Activated CD4-positive, alpha-beta T cell treated with anti-CD3 and anti-CD28 coated beads, Interleukin-2, amount 10 ng/mL, durations not matched to agents 24 days and 14 days (primary cell): ENCODE measurements at regions of chr11 and their contacts with region 1.

Region 1: DNA sequence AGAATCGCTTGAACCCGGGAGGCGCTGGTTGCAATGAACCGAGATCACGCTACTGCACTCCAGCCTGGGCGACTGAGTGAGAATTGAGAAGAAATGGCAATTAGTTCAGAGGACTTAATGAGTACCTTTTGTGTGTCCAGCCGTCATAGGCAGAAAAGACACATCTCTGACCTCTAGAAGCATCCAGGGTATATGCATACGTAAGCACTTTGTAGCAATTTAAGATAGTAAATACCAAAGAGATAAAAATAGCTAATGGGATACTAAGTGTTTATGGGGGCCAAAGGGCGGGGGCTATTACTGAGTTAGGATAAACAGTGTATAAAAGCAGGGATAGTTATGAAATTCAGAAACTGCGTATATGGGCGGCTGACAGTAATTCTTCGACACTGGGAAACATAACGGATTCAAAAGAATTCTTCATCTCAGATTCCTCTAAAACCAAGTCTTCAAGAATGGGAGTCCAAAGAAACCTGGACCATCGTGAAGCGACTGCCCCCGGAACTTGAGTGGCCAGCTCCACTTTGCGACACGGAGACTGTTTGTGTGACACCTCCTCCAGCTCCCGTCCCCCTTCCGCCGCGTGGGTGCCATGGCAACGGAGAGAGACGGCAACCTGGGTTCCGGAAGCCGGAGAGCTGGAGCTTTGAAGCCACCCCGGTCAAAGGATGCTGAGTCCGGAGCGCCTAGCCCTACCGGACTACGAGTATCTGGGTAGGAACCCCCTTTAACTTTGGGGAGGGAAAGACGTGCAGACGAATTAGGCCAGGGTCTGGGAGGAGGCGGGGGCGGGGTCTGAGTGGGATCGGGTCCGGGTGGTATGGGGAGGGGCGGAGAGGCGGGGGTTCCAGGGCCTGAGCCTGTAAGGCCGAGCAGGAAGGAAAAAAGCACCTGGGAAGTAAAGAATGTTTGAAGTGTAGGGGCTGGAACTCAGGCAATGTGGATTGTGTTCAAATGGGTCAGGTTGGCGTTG is at the start of gene CSTPP1:
- DNase-seq: peak; percentile 98
- H3K4me3 Mint-ChIP-seq: peak within 1 kb of the TSS; percentile 89
- H3K27ac Mint-ChIP-seq: peak within 1 kb of the TSS; percentile 94
- H3K4me1 Mint-ChIP-seq: peaks cover 14% of the 10 kb centered on the region
- H3K27me3 Mint-ChIP-seq: peaks cover 7% of the 10 kb centered on the region
- total RNA-seq, gene CSTPP1: 16.9 and 18.0 TPM in 2 replicates

Region 2: GRCh38 chr11:46700241-46701077 is 236.0 kb before region 1 on chr11 and contains the starts of genes ARHGAP1 and ZNF408:
- intact Hi-C with region 1: loop called (anchors 2 kb)
- DNase-seq: peak; percentile 100
- H3K4me3 Mint-ChIP-seq: peak within 1 kb of the TSS; percentile 99
- H3K27ac Mint-ChIP-seq: peak within 1 kb of the TSS; percentile 98
- H3K4me1 Mint-ChIP-seq: peaks cover 38% of the 10 kb centered on the region
- H3K27me3 Mint-ChIP-seq: peaks cover 3% of the 10 kb centered on the region
- total RNA-seq, gene ARHGAP1: 59.1 and 61.7 TPM in 2 replicates
- total RNA-seq, gene ZNF408: 12.9 and 14.1 TPM in 2 replicates

Region 3: GRCh38 chr11:46916286-46917108 is 19.9 kb before region 1 on chr11:
- intact Hi-C with region 1: loop called (anchors 2 kb)
- DNase-seq: no peak
- H3K4me3 Mint-ChIP-seq: peak overlapping the region; percentile 70
- H3K27ac Mint-ChIP-seq: no peak overlapping the region
- H3K4me1 Mint-ChIP-seq: peaks cover 21% of the 10 kb centered on the region
- H3K27me3 Mint-ChIP-seq: peaks cover 71% of the 10 kb centered on the region

Region 4: GRCh38 chr11:47123094-47123493 is 186.7 kb after region 1 on chr11:
- intact Hi-C with region 1: no loop called
- DNase-seq: no peak
- H3K4me3 Mint-ChIP-seq: no peak overlapping the region
- H3K27ac Mint-ChIP-seq: no peak overlapping the region
- H3K4me1 Mint-ChIP-seq: no peaks in the 10 kb centered on the region
- H3K27me3 Mint-ChIP-seq: no peaks in the 10 kb centered on the region

Region 5: DNA sequence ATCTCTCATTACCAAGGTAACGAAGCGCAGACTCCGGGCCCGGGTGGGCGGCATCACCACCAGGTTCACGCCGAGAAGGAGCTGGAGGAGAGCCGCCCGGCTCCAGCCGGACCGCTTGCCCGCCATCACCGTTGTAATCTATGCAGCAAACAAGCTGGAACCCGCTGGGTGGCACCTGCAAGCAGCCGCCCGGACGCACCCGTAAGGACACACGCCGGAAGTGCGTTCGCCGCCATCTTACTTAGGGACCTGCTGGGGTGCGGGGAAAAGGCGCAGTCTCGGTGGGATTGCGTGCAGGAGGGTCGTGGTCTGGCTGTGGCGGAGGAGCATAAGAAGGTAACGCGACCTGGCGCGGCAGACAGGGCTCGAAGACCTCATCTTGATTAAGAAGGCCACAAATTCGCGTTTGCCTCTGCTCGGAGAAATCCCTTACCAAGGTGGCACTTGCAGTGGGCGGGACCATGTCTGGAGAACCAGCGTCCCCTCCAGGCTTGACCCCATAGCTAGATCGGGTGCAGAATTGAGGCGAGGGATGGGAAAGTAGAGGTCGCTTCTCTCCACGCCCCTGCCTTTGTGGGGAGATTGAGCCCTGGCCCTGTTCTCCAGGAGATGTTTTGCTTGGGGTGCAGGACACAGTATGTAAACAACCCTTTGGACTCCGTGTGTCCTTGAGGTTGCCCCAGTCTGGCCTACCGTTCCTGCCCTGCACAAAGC is 312.4 kb after region 1 on chr11 and contains the start of gene ACP2:
- intact Hi-C with region 1: loop called (anchors 5 kb)
- DNase-seq: peak; percentile 96
- H3K4me3 Mint-ChIP-seq: peak within 1 kb of the TSS; percentile 98
- H3K27ac Mint-ChIP-seq: peak within 1 kb of the TSS; percentile 98
- H3K4me1 Mint-ChIP-seq: peaks cover 14% of the 10 kb centered on the region
- H3K27me3 Mint-ChIP-seq: no peaks in the 10 kb centered on the region
- total RNA-seq, gene ACP2: 24.8 and 27.6 TPM in 2 replicates

Region 6: GRCh38 chr11:47259178-47259977 is 323.0 kb after region 1 on chr11:
- intact Hi-C with region 1: no loop called
- DNase-seq: peak; percentile 84
- H3K4me3 Mint-ChIP-seq: no peak overlapping the region
- H3K27ac Mint-ChIP-seq: peak overlapping the region; percentile 7
- H3K4me1 Mint-ChIP-seq: peaks cover 15% of the 10 kb centered on the region
- H3K27me3 Mint-ChIP-seq: no peaks in the 10 kb centered on the region

Region 7: DNA sequence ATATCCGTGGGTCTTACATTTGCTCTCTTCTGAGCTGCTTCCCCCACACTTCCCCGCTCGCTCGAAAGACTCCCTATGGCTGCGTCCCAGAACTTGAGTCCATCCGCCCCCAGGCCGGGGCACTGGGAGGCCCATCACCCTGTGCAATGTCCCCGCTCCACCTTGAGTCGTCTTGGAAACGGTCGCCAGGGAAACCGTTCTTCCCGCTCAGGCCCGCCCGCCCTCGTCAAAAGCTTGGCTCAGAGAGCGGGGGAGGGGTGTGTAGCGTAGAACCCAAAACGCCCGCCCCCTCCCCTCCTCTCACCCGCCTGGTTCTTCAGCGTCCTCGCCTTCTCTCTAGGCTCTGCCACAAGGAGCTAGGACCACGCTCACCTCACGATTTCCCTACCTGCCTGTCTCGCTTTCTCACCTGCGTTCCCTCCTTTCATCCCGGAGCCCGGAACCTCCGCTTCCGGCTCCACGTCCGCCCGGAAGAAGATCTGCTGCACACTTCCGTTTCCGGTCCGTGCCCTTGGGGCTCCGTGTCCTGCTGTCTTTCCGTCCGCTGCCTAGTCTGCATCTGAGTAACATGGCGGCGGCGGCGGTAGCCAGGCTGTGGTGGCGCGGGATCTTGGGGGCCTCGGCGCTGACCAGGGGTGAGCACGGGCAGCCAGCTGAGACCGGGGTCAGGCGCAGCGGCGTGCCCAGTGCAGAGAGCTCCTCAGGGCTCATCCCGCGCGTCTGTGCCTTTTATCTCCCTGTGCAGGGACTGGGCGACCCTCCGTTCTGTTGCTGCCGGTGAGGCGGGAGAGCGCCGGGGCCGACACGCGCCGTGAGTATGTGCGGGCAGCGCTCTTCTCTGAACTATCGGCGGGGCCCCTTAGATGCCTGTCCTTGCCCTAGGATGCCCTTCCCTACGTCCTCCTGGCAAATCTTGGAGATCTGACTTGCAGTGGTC is 642.4 kb after region 1 on chr11 and contains the starts of genes KBTBD4 and NDUFS3:
- intact Hi-C with region 1: loop called (anchors 5 kb)
- DNase-seq: peak; percentile 98
- H3K4me3 Mint-ChIP-seq: peak within 1 kb of the TSS; percentile 94
- H3K27ac Mint-ChIP-seq: peak within 1 kb of the TSS; percentile 96
- H3K4me1 Mint-ChIP-seq: peaks cover 27% of the 10 kb centered on the region
- H3K27me3 Mint-ChIP-seq: no peaks in the 10 kb centered on the region
- total RNA-seq, gene KBTBD4: 16.4 and 16.7 TPM in 2 replicates
- total RNA-seq, gene NDUFS3: 151 and 159 TPM in 2 replicates